ENCODE measurements at regions of chr12 and their contacts with region 1.

Region 1: DNA sequence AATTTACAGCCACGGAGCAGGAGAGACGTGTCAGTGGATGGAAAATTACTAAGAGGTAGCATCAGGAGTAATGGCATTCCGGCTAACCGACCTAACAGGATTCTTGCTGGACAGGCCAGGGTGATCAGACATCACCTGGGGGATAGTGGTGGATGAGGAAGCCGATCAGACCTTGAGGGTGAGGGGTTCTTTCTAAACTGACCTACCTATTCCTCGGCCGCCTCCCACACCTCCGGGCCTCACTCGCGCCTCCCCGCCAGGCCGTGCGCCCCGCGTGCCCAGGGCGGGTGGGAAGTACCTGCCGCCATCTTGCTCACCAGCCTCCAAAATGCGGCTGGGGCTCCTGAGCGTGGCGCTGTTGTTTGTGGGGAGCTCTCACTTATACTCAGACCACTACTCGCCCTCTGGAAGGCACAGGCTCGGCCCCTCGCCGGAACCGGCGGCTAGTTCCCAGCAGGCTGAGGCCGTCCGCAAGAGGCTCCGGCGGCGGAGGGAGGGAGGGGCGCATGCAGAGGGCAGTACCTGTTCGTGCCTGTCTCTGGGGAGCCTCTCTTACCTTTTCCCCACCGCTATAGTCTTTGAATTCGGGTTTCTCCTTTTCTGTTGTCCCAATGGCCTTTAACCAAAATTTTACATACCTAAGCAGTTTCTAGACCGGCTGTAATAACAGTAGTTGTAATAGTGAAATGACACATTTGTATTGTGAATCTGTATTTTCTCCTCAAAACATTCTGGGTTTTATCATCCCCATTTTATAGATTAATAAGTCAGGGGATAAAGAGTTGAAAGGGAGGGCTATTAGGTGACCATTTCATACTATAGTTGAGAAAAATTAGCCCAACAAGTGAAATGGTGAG is at the start of gene TMPRSS12:
- DNase-seq: peak; percentile 39 to 63 (median 62)
- ATAC-seq: peak; percentile 78 to 90 (median 79)
- H3K4me3 ChIP-seq: peak within 1 kb of the TSS; percentile 0 to 43 (median 21)
- H3K27ac ChIP-seq: peak within 1 kb of the TSS in 1 of 3 donors; percentile 11
- H3K4me1 ChIP-seq: no peaks in the 10 kb centered on the region
- H3K27me3 ChIP-seq: no peaks in the 10 kb centered on the region
- CTCF ChIP-seq: peak in 2 of 4 donors; percentile 16 to 30
- POLR2A ChIP-seq: no peak
- total RNA-seq, gene TMPRSS12: not detected

Region 2: GRCh38 chr12:50734409-50735263 is 108.2 kb before region 1 on chr12:
- intact Hi-C with region 1: no loop called
- DNase-seq: no peak
- ATAC-seq: peak; percentile 54 to 68 (median 62)
- H3K4me3 ChIP-seq: no peak overlapping the region
- H3K27ac ChIP-seq: no peak overlapping the region
- H3K4me1 ChIP-seq: no peaks in the 10 kb centered on the region
- H3K27me3 ChIP-seq: no peaks in the 10 kb centered on the region
- CTCF ChIP-seq: peak; percentile 29 to 54 (median 44)
- POLR2A ChIP-seq: no peak

Region 3: GRCh38 chr12:50799908-50800307 is 43.0 kb before region 1 on chr12:
- intact Hi-C with region 1: no loop called
- DNase-seq: no peak
- ATAC-seq: no peak
- H3K4me3 ChIP-seq: no peak overlapping the region
- H3K27ac ChIP-seq: no peak overlapping the region
- H3K4me1 ChIP-seq: no peaks in the 10 kb centered on the region
- H3K27me3 ChIP-seq: no peaks in the 10 kb centered on the region
- CTCF ChIP-seq: no peak
- POLR2A ChIP-seq: no peak

Region 4: GRCh38 chr12:50918584-50919316 is 75.9 kb after region 1 on chr12:
- intact Hi-C with region 1: loop called in 1 of 2 experiments (anchors 10 kb)
- DNase-seq: no peak
- ATAC-seq: no peak
- H3K4me3 ChIP-seq: no peak overlapping the region
- H3K27ac ChIP-seq: no peak overlapping the region
- H3K4me1 ChIP-seq: peaks cover 0 to 20% (median 9%) of the 10 kb centered on the region in 4 donors
- H3K27me3 ChIP-seq: no peaks in the 10 kb centered on the region
- CTCF ChIP-seq: no peak
- POLR2A ChIP-seq: no peak

Measured in right lobe of liver (tissue), 6 donors.